CD8-positive, alpha-beta T cell (primary cell): ENCODE measurements at regions of chr15 and their contacts with region 1.

Region 1: GRCh38 chr15:36579792-36580431 is 486 bp downstream of the CDIN1 start:
- DNase-seq: peak in 6 of 9 experiments; percentile 1 to 57 (median 24)
- ATAC-seq: peak; percentile 22
- H3K4me3 ChIP-seq: peak overlapping the region; percentile 87 to 95
- H3K4me3 Mint-ChIP-seq: peak overlapping the region; percentile 91
- H3K27ac ChIP-seq: peak overlapping the region; percentile 74 to 93
- H3K27ac Mint-ChIP-seq: peak overlapping the region; percentile 93
- H3K4me1 ChIP-seq: peaks cover 12% of the 10 kb centered on the region
- H3K4me1 Mint-ChIP-seq: peaks cover 32% of the 10 kb centered on the region
- H3K27me3 ChIP-seq: no peaks in the 10 kb centered on the region
- H3K27me3 Mint-ChIP-seq: no peaks in the 10 kb centered on the region
- CTCF ChIP-seq: no peak

Region 2: GRCh38 chr15:34987985-34988873 is 1591.7 kb before region 1 on chr15 and contains the start of gene ZNF770:
- CTCF ChIA-PET with region 1: no interaction called
- POLR2A ChIA-PET with region 1: no interaction called
- intact Hi-C with region 1: loop called (anchors 1 to 5 kb)
- DNase-seq: peak; percentile 72 to 93 (median 81)
- ATAC-seq: peak; percentile 89
- H3K4me3 ChIP-seq: peak within 1 kb of the TSS; percentile 99 to 100
- H3K4me3 Mint-ChIP-seq: peak within 1 kb of the TSS; percentile 99
- H3K27ac ChIP-seq: peak within 1 kb of the TSS; percentile 95 to 96
- H3K27ac Mint-ChIP-seq: peak within 1 kb of the TSS; percentile 99
- H3K4me1 ChIP-seq: peaks cover 24% of the 10 kb centered on the region
- H3K4me1 Mint-ChIP-seq: peaks cover 45% of the 10 kb centered on the region
- H3K27me3 ChIP-seq: no peaks in the 10 kb centered on the region
- H3K27me3 Mint-ChIP-seq: peaks cover 1% of the 10 kb centered on the region
- CTCF ChIP-seq: no peak
- total RNA-seq, gene ZNF770: 32.9 to 37.7 TPM

Region 3: GRCh38 chr15:36066757-36067156 is 513.2 kb before region 1 on chr15:
- CTCF ChIA-PET with region 1: no interaction called
- POLR2A ChIA-PET with region 1: no interaction called
- intact Hi-C with region 1: no loop called
- DNase-seq: no peak
- ATAC-seq: no peak
- H3K4me3 ChIP-seq: no peak overlapping the region
- H3K4me3 Mint-ChIP-seq: no peak overlapping the region
- H3K27ac ChIP-seq: no peak overlapping the region
- H3K27ac Mint-ChIP-seq: no peak overlapping the region
- H3K4me1 ChIP-seq: no peaks in the 10 kb centered on the region
- H3K4me1 Mint-ChIP-seq: no peaks in the 10 kb centered on the region
- H3K27me3 ChIP-seq: no peaks in the 10 kb centered on the region
- H3K27me3 Mint-ChIP-seq: no peaks in the 10 kb centered on the region
- CTCF ChIP-seq: no peak

Region 4: GRCh38 chr15:36517758-36518157 is 62.2 kb before region 1 on chr15:
- CTCF ChIA-PET with region 1: no interaction called
- POLR2A ChIA-PET with region 1: no interaction called
- intact Hi-C with region 1: no loop called
- DNase-seq: no peak
- ATAC-seq: no peak
- H3K4me3 ChIP-seq: no peak overlapping the region
- H3K4me3 Mint-ChIP-seq: no peak overlapping the region
- H3K27ac ChIP-seq: no peak overlapping the region
- H3K27ac Mint-ChIP-seq: no peak overlapping the region
- H3K4me1 ChIP-seq: no peaks in the 10 kb centered on the region
- H3K4me1 Mint-ChIP-seq: no peaks in the 10 kb centered on the region
- H3K27me3 ChIP-seq: no peaks in the 10 kb centered on the region
- H3K27me3 Mint-ChIP-seq: no peaks in the 10 kb centered on the region
- CTCF ChIP-seq: no peak

Region 5: DNA sequence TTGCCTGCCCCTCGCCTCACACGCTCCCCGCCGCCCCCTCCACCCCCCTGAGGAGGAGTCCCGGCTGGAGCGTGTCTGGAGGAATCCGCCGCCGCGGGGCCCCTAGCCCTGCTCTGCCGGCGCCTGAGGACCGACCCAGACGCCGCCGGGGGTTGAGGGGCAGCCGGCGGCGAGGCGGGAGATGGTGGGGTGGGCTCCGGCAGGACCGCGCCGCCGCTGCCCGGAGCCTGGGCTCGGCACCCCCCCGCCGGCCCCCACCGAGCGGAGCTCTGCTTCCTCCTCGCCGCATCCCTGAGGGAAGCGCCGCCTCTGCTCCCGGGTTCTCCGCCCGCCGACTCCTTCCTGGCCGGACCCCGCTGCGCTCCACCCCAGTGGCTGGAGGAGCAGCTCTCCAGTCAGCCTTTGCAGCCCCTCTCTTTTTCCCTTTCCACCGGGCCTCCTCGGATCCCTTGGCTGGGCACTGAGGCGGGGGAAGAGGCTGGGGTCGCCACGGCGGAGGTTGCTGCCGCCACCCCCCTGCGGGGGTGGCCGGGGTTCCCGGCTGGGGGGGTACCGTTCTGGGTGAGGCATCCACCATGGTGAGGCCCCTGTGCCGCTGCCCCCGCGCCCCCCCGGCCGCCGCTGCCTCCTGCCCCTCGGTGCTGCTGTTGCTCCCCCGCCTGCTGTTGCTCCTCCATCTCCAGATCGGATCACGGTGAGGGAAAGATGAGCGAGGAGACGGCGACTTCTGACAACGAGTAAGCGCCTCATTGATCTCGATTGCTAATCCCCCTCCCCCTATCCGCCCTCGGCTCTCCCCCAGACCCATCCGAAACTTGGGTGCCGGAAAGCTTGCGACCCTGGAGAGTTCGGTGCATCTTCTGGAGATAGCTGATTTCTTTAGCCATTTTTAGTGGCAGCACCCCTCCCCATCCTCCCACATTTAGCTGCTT is 1672.8 kb after region 1 on chr15 and contains the start of gene SPRED1:
- CTCF ChIA-PET with region 1: no interaction called
- POLR2A ChIA-PET with region 1: no interaction called
- intact Hi-C with region 1: loop called in 1 of 2 experiments (anchors 5 kb)
- DNase-seq: peak in 7 of 9 experiments; percentile 1 to 50 (median 32)
- ATAC-seq: peak; percentile 13
- H3K4me3 ChIP-seq: peak within 1 kb of the TSS; percentile 75 to 85
- H3K4me3 Mint-ChIP-seq: peak within 1 kb of the TSS; percentile 84
- H3K27ac ChIP-seq: no peak within 1 kb of the TSS
- H3K27ac Mint-ChIP-seq: no peak within 1 kb of the TSS
- H3K4me1 ChIP-seq: peaks cover 21% of the 10 kb centered on the region
- H3K4me1 Mint-ChIP-seq: peaks cover 26% of the 10 kb centered on the region
- H3K27me3 ChIP-seq: no peaks in the 10 kb centered on the region
- H3K27me3 Mint-ChIP-seq: peaks cover 10% of the 10 kb centered on the region
- CTCF ChIP-seq: no peak
- total RNA-seq, gene SPRED1: 0.05 to 0.50 TPM